ENCODE measurements at regions of chr10 and their contacts with region 1.

Region 1: GRCh38 chr10:22682237-22683139 is 31.9 kb downstream of the PIP4K2A start:
- DNase-seq: peak; percentile 73
- H3K4me3 Mint-ChIP-seq: peak overlapping the region; percentile 60
- H3K27ac Mint-ChIP-seq: peak overlapping the region; percentile 97
- H3K4me1 Mint-ChIP-seq: peaks cover 86% of the 10 kb centered on the region
- H3K27me3 Mint-ChIP-seq: no peaks in the 10 kb centered on the region

Region 2: DNA sequence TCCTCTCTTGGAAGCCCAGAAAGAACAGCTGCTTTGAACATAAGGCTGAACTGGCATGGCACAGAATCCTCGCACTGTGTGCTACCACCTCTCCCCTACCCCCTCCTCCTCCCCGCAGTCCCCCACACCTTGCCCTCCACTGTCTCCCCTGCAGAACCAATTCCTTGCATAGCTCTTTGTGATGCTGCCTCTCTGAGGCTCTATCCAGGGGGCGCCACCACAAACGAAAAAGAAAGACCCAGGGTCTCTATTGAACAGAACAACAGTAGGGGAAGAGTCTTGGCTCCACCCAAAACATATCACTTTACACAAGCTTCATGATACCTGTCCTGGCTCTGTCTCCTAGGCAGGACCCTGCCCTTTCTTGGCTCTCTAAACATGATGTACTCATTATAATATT is 438.5 kb before region 1 on chr10:
- CTCF ChIA-PET with region 1: no interaction called
- intact Hi-C with region 1: loop called (anchors 2 kb)
- DNase-seq: no peak
- H3K4me3 Mint-ChIP-seq: no peak overlapping the region
- H3K27ac Mint-ChIP-seq: no peak overlapping the region
- H3K4me1 Mint-ChIP-seq: peaks cover 40% of the 10 kb centered on the region
- H3K27me3 Mint-ChIP-seq: no peaks in the 10 kb centered on the region

Region 3: DNA sequence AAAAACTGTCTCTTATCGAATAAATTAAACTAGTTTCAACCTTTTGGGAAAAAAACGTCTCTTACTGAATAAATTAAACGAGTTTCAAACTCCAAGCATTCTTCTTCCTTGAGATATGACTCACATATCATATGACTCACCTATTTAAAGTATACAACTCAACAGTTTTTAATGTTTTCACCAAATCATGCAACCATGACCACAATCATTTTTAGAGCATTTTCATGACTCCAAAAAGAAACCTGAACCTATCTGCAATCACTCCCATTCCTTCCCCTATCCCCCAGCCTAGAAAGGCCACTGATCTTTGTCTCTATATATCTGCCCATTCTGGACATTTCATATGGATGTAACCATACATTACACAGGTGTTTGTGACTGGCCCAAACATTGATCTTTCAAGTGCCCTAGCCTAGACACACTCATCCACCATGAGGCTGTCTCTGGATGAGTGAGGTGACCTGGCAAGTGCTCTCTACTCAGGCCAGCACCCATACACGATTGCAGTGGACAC is 83.4 kb before region 1 on chr10:
- CTCF ChIA-PET with region 1: no interaction called
- intact Hi-C with region 1: loop called (anchors 1 kb)
- DNase-seq: no peak
- H3K4me3 Mint-ChIP-seq: no peak overlapping the region
- H3K27ac Mint-ChIP-seq: peak overlapping the region; percentile 9
- H3K4me1 Mint-ChIP-seq: peaks cover 62% of the 10 kb centered on the region
- H3K27me3 Mint-ChIP-seq: no peaks in the 10 kb centered on the region

Region 4: GRCh38 chr10:22646388-22646853 is 36.1 kb before region 1 on chr10:
- CTCF ChIA-PET with region 1: interaction called, 3 read pairs
- intact Hi-C with region 1: loop called (anchors 1 kb)
- DNase-seq: no peak
- H3K4me3 Mint-ChIP-seq: peak overlapping the region; percentile 30
- H3K27ac Mint-ChIP-seq: peak overlapping the region; percentile 90
- H3K4me1 Mint-ChIP-seq: peaks cover 86% of the 10 kb centered on the region
- H3K27me3 Mint-ChIP-seq: no peaks in the 10 kb centered on the region

Region 5: GRCh38 chr10:22666287-22667092 is 16.0 kb before region 1 on chr10:
- CTCF ChIA-PET with region 1: interaction called, 4 read pairs
- intact Hi-C with region 1: loop called (anchors 1 kb)
- DNase-seq: peak; percentile 74
- H3K4me3 Mint-ChIP-seq: peak overlapping the region; percentile 73
- H3K27ac Mint-ChIP-seq: peak overlapping the region; percentile 74
- H3K4me1 Mint-ChIP-seq: peaks cover 76% of the 10 kb centered on the region
- H3K27me3 Mint-ChIP-seq: no peaks in the 10 kb centered on the region

Region 6: GRCh38 chr10:22714479-22715289 is 32.2 kb after region 1 on chr10 and contains the start of gene PIP4K2A:
- CTCF ChIA-PET with region 1: interaction called, 5 read pairs
- intact Hi-C with region 1: loop called (anchors 1 kb)
- DNase-seq: peak; percentile 74
- H3K4me3 Mint-ChIP-seq: peak within 1 kb of the TSS; percentile 88
- H3K27ac Mint-ChIP-seq: peak within 1 kb of the TSS; percentile 79
- H3K4me1 Mint-ChIP-seq: peaks cover 27% of the 10 kb centered on the region
- H3K27me3 Mint-ChIP-seq: no peaks in the 10 kb centered on the region
- total RNA-seq, gene PIP4K2A: 68.0 to 74.1 TPM

Region 7: GRCh38 chr10:23368816-23369640 is 686.5 kb after region 1 on chr10:
- CTCF ChIA-PET with region 1: no interaction called
- intact Hi-C with region 1: loop called (anchors 10 kb)
- DNase-seq: peak; percentile 24
- H3K4me3 Mint-ChIP-seq: peak overlapping the region; percentile 14
- H3K27ac Mint-ChIP-seq: peak overlapping the region; percentile 73
- H3K4me1 Mint-ChIP-seq: peaks cover 63% of the 10 kb centered on the region
- H3K27me3 Mint-ChIP-seq: no peaks in the 10 kb centered on the region